ENCODE measurements at regions of chr2 and their contacts with region 1.

Region 1: GRCh38 chr2:237700512-237701032 is 73.2 kb downstream of the LRRFIP1 start:
- DNase-seq: peak; percentile 78
- ATAC-seq: peak; percentile 54

Region 2: GRCh38 chr2:237729681-237730417 is 29.3 kb after region 1 on chr2:
- intact Hi-C with region 1: loop called (anchors 2 kb)
- DNase-seq: no peak
- ATAC-seq: no peak